Right cardiac atrium (tissue), 5 donors: ENCODE measurements at regions of chr17 and their contacts with region 1.

Region 1: DNA sequence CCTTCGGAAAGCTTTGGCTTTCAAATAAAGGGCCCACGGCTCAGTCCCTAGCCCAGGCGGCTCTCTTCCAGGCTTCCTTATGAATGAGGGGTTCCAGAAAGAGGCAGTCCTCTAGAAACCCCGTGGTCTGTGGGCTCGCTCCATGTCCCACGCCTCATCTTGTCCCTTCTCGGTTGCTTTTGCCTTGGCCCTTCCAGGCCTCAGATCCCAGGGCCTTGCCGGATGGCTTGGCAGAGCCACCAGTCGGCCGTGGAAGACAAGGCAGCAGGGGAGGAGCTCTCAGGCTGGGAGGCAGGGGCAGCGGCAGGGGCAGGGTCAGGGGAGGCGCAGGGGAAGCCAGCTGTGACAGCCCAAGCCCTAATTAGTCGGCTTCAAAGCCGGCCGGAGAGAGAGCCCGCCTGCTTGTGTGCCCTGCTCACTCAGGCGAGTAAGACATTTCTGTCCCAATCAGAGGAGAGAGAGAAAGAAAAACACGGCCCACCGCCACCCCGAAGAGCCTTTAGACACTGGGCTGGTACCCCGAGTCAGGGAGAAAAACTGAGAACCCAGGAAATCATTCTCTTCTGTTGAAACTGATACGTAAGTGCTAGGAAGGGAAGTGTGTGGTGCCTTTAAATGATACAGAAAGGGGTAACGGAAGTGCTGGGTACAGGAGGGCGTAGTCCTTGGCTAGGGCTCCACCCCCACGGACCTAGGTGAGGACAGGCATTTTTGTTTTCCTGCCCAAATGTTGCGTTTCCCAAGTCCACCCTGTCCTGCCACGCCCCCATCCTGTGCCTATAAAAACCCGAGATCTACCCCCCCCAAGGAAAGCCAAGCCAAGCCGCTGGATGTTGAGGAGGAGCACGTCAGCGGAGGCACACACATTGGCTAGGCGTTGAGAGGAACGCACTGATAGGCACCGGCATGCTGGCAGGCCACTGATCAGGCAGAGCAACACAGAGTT is 27.8 kb upstream of the MEIOC start:
- DNase-seq: peak; percentile 82 to 86 (median 83)
- ATAC-seq: peak; percentile 87 to 91
- H3K4me3 ChIP-seq: peak overlapping the region; percentile 26
- H3K27ac ChIP-seq: peak overlapping the region; percentile 55
- H3K4me1 ChIP-seq: no peaks in the 10 kb centered on the region
- H3K27me3 ChIP-seq: no peaks in the 10 kb centered on the region

Region 2: DNA sequence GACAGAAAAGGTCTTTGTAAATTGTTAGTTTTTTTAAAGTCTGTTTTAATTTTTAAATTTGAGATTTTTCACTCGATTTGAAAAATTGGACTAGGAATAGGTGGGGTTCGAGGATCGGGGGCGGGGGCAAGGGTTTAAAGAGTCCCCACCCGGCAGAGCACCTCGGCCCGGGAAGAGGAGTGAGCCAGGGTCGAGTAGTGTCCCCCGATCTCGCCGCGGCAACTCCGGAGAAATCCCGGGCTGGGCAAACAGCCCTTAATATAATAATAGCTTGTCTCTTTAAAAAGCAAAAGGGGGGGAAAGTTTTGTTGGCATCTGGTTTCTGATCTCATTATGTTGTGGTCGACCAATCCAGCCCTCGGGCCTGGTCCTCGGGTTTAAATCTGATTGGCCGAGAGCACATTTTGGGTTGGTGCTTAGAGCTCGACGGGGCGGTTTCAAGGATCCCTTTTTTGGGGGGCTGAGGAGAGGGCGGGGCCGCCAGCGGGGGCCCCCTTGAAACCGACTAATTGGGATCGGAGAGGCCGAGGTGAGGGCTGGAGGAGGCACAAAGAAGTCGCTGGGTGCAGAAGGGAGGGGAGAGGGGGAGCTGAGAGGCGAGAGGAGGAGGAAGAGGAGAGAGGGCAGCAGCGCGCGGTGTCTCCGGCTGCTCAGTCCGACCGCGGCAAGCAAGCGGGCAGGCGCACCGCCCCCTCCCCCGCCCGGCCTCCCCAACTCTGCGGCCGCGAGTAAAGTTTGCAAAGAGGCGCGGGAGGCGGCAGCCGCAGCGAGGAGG is 71.5 kb before region 1 on chr17 and contains the start of gene FZD2:
- intact Hi-C with region 1: loop called in 1 of 4 experiments (anchors 10 kb)
- DNase-seq: peak; percentile 88 to 95 (median 92)
- ATAC-seq: peak; percentile 94 to 95
- H3K4me3 ChIP-seq: peak within 1 kb of the TSS; percentile 92
- H3K27ac ChIP-seq: peak within 1 kb of the TSS; percentile 54
- H3K4me1 ChIP-seq: no peaks in the 10 kb centered on the region
- H3K27me3 ChIP-seq: no peaks in the 10 kb centered on the region
- total RNA-seq, gene FZD2: 4.7 to 12.3 (median 7.9) TPM

Region 3: GRCh38 chr17:44672479-44673093 is 44.1 kb after region 1 on chr17:
- intact Hi-C with region 1: no loop called
- DNase-seq: no peak
- ATAC-seq: no peak
- H3K4me3 ChIP-seq: no peak overlapping the region
- H3K27ac ChIP-seq: no peak overlapping the region
- H3K4me1 ChIP-seq: no peaks in the 10 kb centered on the region
- H3K27me3 ChIP-seq: no peaks in the 10 kb centered on the region